CD8-positive, alpha-beta T cell (primary cell): ENCODE measurements at regions of chr13 and their contacts with region 1.

Region 1: GRCh38 chr13:42969558-42970172 is 22.4 kb downstream of the EPSTI1 start:
- DNase-seq: peak; percentile 65 to 90 (median 82)
- ATAC-seq: peak; percentile 92
- H3K4me3 ChIP-seq: no peak overlapping the region
- H3K4me3 Mint-ChIP-seq: no peak overlapping the region
- H3K27ac ChIP-seq: no peak overlapping the region
- H3K27ac Mint-ChIP-seq: peak overlapping the region; percentile 28
- H3K4me1 ChIP-seq: peaks cover 5% of the 10 kb centered on the region
- H3K4me1 Mint-ChIP-seq: peaks cover 17% of the 10 kb centered on the region
- H3K27me3 ChIP-seq: no peaks in the 10 kb centered on the region
- H3K27me3 Mint-ChIP-seq: no peaks in the 10 kb centered on the region
- CTCF ChIP-seq: peak; percentile 90

Region 2: GRCh38 chr13:41835871-41836270 is 1133.8 kb before region 1 on chr13:
- CTCF ChIA-PET with region 1: no interaction called
- POLR2A ChIA-PET with region 1: no interaction called
- intact Hi-C with region 1: no loop called
- DNase-seq: no peak
- ATAC-seq: no peak
- H3K4me3 ChIP-seq: no peak overlapping the region
- H3K4me3 Mint-ChIP-seq: no peak overlapping the region
- H3K27ac ChIP-seq: no peak overlapping the region
- H3K27ac Mint-ChIP-seq: no peak overlapping the region
- H3K4me1 ChIP-seq: no peaks in the 10 kb centered on the region
- H3K4me1 Mint-ChIP-seq: peaks cover 2% of the 10 kb centered on the region
- H3K27me3 ChIP-seq: no peaks in the 10 kb centered on the region
- H3K27me3 Mint-ChIP-seq: no peaks in the 10 kb centered on the region
- CTCF ChIP-seq: no peak

Region 3: DNA sequence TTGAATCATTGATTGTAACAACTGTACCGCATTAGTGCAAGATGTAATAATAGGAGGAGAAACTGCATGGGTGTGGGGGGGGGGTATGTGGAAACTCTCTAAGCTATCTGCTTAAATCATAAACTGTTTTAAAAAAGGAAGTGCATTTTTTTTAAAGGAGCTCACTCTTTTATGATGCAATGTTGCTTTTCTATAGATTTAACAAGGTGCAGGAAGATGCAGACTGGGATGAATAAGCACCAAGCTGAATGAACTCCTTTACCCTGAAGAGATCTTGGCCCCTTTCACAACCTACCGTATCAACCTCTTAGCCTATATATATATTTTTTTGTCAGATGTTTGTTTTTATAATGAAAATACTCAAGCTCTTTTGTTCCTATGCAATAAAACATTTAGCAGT is 601.8 kb before region 1 on chr13:
- CTCF ChIA-PET with region 1: no interaction called
- POLR2A ChIA-PET with region 1: no interaction called
- intact Hi-C with region 1: no loop called
- DNase-seq: no peak
- ATAC-seq: no peak
- H3K4me3 ChIP-seq: no peak overlapping the region
- H3K4me3 Mint-ChIP-seq: no peak overlapping the region
- H3K27ac ChIP-seq: no peak overlapping the region
- H3K27ac Mint-ChIP-seq: no peak overlapping the region
- H3K4me1 ChIP-seq: no peaks in the 10 kb centered on the region
- H3K4me1 Mint-ChIP-seq: peaks cover 17% of the 10 kb centered on the region
- H3K27me3 ChIP-seq: no peaks in the 10 kb centered on the region
- H3K27me3 Mint-ChIP-seq: no peaks in the 10 kb centered on the region
- CTCF ChIP-seq: no peak

Region 4: DNA sequence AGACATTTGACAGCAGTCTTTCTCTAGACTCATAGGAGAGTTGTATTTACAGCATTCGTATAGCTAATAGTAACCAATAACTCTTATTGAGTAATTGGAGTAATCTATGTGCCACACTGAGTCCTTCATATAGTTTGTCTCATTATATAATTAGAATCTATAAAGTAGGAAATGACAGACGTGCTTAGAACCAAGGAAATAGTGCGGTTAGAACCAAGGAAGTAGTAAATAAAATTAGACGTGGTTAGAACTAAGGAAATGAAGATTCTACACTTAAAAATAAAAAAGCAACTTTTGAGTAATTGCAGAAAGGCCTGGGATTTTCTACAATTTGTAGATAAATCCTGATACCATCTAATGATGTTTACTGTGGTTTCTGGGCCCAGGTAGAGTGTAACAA is 503.5 kb before region 1 on chr13:
- CTCF ChIA-PET with region 1: no interaction called
- POLR2A ChIA-PET with region 1: no interaction called
- intact Hi-C with region 1: loop called in 1 of 2 experiments (anchors 10 kb)
- DNase-seq: peak in 1 of 9 experiments; percentile 9
- ATAC-seq: no peak
- H3K4me3 ChIP-seq: no peak overlapping the region
- H3K4me3 Mint-ChIP-seq: peak overlapping the region; percentile 16
- H3K27ac ChIP-seq: peak overlapping the region in 1 of 2 experiments; percentile 49
- H3K27ac Mint-ChIP-seq: peak overlapping the region; percentile 42
- H3K4me1 ChIP-seq: peaks cover 13% of the 10 kb centered on the region
- H3K4me1 Mint-ChIP-seq: peaks cover 23% of the 10 kb centered on the region
- H3K27me3 ChIP-seq: no peaks in the 10 kb centered on the region
- H3K27me3 Mint-ChIP-seq: no peaks in the 10 kb centered on the region
- CTCF ChIP-seq: no peak

Region 5: DNA sequence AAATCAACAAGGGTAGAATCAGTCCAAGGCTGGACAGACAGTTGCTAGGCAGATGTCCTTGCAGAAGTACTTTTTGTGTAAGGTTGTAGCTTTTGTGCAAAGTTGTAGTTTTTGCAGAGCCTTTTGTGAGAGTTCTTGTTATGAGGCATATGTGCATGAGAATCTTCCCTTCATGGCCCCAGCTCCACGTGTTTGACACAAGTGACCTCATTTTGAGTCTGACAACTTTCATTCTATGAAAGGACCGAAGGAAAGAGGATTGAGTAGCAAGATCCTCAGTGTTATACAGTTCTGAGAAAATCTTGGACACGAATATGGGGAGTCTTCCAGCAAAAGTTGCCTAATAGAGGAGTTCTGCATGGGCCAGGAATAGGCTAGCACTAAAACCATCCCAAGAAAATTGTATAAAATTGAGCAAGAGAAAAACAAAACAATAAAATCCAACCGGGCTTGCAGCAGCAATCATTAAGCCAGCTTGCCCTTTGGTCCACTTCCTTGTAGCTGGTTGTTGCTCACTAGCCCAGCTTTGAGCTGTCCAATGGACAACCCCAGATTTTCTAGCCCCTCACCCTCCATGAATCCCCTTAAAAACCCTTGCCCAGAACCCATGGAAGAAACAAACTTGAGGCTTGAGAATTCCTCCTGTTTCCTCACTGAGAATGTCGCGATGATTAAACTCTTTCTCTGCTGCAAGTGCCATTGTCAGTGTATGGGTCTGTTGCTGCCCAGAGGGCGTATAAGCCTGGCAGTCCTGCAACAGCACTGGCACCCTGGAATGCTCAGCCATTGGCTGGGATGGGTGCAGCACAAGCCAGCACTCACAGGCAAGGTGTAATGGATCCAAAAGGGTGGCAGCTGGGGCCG is 15.9 kb after region 1 on chr13:
- CTCF ChIA-PET with region 1: interaction called, 14 read pairs
- POLR2A ChIA-PET with region 1: interaction called, 4 read pairs
- intact Hi-C with region 1: loop called in 1 of 2 experiments (anchors 2 kb)
- DNase-seq: no peak
- ATAC-seq: no peak
- H3K4me3 ChIP-seq: no peak overlapping the region
- H3K4me3 Mint-ChIP-seq: no peak overlapping the region
- H3K27ac ChIP-seq: no peak overlapping the region
- H3K27ac Mint-ChIP-seq: no peak overlapping the region
- H3K4me1 ChIP-seq: peaks cover 8% of the 10 kb centered on the region
- H3K4me1 Mint-ChIP-seq: peaks cover 11% of the 10 kb centered on the region
- H3K27me3 ChIP-seq: no peaks in the 10 kb centered on the region
- H3K27me3 Mint-ChIP-seq: no peaks in the 10 kb centered on the region
- CTCF ChIP-seq: no peak

Region 6: DNA sequence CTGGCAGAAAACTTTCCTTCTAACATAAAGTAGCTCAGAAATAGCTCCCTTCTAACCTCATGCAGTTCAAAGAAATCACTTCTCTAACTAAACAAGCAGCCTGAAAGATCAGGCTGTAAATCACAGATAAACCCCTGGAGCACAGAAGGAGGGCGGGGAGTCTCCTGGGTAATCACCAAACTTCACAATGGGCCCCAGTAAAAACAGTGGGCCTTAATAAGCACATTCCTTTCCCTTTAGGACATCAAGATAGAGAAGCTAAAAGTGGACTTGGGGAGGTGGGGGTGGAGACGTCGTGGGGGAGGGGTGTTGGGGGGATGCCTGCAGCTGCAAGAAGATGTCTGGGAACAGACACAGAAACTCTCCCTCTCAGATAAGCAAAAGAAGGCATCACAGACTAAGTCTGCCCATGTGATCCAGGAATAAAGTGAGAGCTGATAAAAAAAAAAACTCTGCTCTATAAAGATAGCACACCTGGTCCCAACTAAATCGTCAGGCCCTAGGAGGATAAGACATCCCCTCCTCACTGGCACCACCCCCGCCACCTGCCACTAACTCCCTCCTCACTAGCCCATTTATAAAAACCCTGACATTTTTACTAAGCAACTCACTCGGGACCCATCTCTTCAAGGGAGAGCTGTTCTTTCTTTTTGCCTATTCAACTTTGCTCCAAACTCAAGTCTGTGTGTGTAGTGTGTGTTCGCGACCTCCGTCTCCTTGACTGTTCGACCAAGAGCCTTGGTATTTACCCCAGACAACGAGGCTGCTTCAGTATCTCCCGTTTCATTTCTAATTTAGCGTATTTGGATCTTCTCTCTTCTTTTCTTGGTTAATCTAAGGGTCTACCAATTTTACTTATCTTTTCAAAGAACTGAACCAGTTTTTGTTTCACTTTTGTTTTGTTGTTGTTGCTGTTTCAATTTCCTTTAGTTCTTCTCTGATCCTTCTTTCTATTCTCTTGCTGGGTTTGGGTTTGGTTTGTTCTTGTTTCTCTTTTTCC is 85.4 kb after region 1 on chr13:
- CTCF ChIA-PET with region 1: interaction called, 3 read pairs
- POLR2A ChIA-PET with region 1: no interaction called
- intact Hi-C with region 1: loop called in 1 of 2 experiments (anchors 5 kb)
- DNase-seq: peak in 5 of 9 experiments; percentile 17 to 60 (median 40)
- ATAC-seq: peak; percentile 35
- H3K4me3 ChIP-seq: peak overlapping the region; percentile 55 to 71
- H3K4me3 Mint-ChIP-seq: no peak overlapping the region
- H3K27ac ChIP-seq: peak overlapping the region; percentile 75 to 88
- H3K27ac Mint-ChIP-seq: no peak overlapping the region
- H3K4me1 ChIP-seq: peaks cover 38% of the 10 kb centered on the region
- H3K4me1 Mint-ChIP-seq: peaks cover 34% of the 10 kb centered on the region
- H3K27me3 ChIP-seq: no peaks in the 10 kb centered on the region
- H3K27me3 Mint-ChIP-seq: no peaks in the 10 kb centered on the region
- CTCF ChIP-seq: no peak

Region 7: GRCh38 chr13:43132257-43132656 is 162.6 kb after region 1 on chr13:
- CTCF ChIA-PET with region 1: interaction called, 6 read pairs
- POLR2A ChIA-PET with region 1: no interaction called
- intact Hi-C with region 1: loop called (anchors 1 to 5 kb)
- DNase-seq: peak in 1 of 9 experiments; percentile 16
- ATAC-seq: no peak
- H3K4me3 ChIP-seq: no peak overlapping the region
- H3K4me3 Mint-ChIP-seq: no peak overlapping the region
- H3K27ac ChIP-seq: no peak overlapping the region
- H3K27ac Mint-ChIP-seq: no peak overlapping the region
- H3K4me1 ChIP-seq: peaks cover 12% of the 10 kb centered on the region
- H3K4me1 Mint-ChIP-seq: peaks cover 12% of the 10 kb centered on the region
- H3K27me3 ChIP-seq: no peaks in the 10 kb centered on the region
- H3K27me3 Mint-ChIP-seq: peaks cover 12% of the 10 kb centered on the region
- CTCF ChIP-seq: no peak

Region 8: GRCh38 chr13:43878892-43879754 is 909.5 kb after region 1 on chr13 and contains the start of gene CCDC122:
- CTCF ChIA-PET with region 1: interaction called, 5 read pairs
- POLR2A ChIA-PET with region 1: no interaction called
- intact Hi-C with region 1: loop called in 1 of 2 experiments (anchors 1 kb)
- DNase-seq: peak; percentile 37 to 89 (median 69)
- ATAC-seq: peak; percentile 78
- H3K4me3 ChIP-seq: peak within 1 kb of the TSS; percentile 56 to 66
- H3K4me3 Mint-ChIP-seq: peak within 1 kb of the TSS; percentile 90
- H3K27ac ChIP-seq: peak within 1 kb of the TSS in 1 of 2 experiments; percentile 61
- H3K27ac Mint-ChIP-seq: peak within 1 kb of the TSS; percentile 84
- H3K4me1 ChIP-seq: peaks cover 10% of the 10 kb centered on the region
- H3K4me1 Mint-ChIP-seq: peaks cover 14% of the 10 kb centered on the region
- H3K27me3 ChIP-seq: no peaks in the 10 kb centered on the region
- H3K27me3 Mint-ChIP-seq: peaks cover 11% of the 10 kb centered on the region
- CTCF ChIP-seq: no peak
- total RNA-seq, gene CCDC122: not detected